OCI-LY7 (cell line): ENCODE measurements at regions of chr3 and their contacts with region 1.

Region 1: DNA sequence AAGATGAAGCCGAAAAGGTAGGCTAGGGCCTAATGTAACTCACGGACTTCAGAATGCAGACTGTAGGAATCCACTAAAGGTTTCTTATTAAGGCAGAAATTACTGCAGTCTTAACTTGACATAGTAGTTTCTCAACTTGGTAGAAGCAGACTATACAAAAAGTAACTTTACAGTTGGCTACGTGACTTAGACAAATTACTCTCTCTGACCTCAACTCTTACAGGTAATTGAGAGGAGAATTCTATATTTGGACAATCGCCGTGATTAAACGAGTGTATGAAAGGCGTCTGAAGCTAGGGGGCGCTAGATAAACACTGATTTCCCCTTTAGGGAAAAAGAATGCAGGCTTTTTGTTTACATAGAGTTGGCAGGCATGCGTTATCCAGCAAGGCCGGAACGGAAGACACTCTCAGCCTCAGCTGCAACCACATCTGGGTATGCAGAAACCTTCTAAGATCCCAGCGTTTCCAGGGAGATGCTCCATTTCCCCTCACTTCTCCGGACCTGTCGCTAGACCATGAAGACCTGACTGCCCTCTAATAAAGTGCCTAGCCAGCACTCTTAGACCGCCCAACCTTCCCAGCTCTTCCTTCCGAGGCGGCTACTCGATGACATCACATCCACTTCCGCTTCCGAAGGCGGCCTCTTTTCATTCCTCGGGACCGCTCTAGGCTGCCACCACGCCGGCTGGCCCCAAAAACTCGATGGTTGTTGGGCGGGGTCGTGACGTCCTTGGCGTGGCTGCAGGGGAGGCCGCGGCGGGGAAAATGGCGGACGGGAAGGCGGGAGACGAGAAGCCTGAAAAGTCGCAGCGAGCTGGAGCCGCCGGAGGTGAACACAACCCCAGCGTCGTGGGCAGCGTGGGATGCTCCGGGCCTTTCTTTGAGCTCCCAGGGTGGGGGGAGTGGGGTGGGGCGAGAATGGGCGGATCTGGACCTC is at the start of gene PCNP:
- DNase-seq: peak; percentile 99
- H3K4me3 ChIP-seq: peak within 1 kb of the TSS; percentile 92
- H3K27ac ChIP-seq: peak within 1 kb of the TSS; percentile 76
- H3K4me1 ChIP-seq: peaks cover 36% of the 10 kb centered on the region
- CTCF ChIP-seq: peak; percentile 96
- total RNA-seq, gene PCNP: 49.2 and 63.3 TPM in 2 replicates

Region 2: DNA sequence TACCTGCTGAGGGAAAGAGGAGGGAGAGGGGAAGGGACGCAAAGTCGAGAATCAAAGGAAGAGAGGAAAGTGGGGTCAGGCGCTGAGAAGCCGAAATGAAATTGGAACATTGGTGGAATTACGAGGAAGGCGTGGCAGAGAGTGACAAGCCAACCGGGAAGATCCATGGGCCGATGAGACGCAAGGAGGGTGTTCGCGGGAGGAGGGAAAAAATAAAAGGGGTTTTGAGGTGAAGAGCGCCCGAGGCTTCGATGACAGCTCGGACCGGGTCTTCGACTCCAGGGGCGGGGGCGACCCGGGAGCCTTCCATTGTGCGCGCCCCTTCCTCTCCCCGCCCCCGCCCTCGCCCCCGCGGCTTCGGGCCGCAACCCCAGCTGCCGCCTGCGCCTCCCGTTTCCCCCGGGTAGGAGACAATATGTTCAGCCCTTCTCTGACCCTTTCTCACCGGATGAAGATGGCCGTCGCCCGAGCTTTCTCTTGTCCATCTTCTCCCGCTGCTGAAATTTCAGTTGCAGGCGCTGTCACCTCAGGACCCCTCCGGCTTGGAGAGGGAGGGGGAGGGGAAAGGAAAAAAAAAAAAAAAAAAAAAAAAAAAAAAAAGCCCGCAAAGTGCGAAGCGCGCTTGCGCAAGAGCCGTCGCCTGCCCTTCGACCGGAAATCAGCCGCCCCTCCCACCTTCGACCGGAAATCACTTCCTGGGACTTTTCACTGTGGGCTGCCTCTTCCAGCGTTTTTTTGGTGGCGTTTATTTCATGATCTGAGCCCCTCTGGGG is 60.9 kb before region 1 on chr3 and contains the start of gene SENP7:
- CTCF ChIA-PET with region 1: no interaction called
- POLR2A ChIA-PET with region 1: interaction called, 11 read pairs
- intact Hi-C with region 1: no loop called
- DNase-seq: peak; percentile 86
- H3K4me3 ChIP-seq: peak within 1 kb of the TSS; percentile 85
- H3K27ac ChIP-seq: peak within 1 kb of the TSS; percentile 64
- H3K4me1 ChIP-seq: peaks cover 13% of the 10 kb centered on the region
- CTCF ChIP-seq: no peak
- total RNA-seq, gene SENP7: 13.6 and 17.7 TPM in 2 replicates

Region 3: DNA sequence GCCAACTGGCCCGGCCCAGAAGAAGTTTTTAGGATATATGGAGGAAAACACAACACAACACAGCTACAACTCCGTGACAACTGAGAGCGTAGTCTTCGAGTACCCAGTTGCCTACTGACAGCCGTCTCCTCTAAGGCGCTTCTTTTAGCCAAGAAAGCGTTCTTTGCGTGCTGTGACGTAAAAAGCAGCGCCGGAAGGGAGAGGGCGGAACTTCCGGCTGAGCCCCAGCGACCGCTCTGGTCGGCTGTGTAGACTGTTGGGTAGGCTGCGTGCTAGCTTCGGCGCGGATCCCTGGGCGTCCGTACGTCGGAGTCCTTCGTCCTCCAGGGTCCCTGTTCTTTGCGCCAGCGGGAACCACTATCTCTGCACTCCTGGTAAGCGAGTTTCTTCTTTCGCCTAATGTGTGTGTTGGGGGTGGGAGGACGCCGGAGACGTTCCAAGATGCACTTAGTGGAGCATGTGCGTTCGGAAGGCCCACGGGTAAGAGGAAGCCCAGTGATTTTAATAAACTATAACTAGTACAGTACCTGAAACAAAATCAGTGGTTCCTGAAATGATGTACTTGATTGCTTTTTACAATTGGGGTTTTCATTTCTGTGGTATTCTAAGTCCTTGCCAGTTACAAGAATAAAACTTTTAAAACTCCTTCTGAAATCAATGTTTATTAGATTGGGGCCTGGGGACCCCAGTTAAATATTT is 11.9 kb before region 1 on chr3 and contains the start of gene TRMT10C:
- CTCF ChIA-PET with region 1: no interaction called
- POLR2A ChIA-PET with region 1: interaction called, 26 read pairs
- intact Hi-C with region 1: loop called (anchors 1 kb)
- DNase-seq: peak; percentile 95
- H3K4me3 ChIP-seq: peak within 1 kb of the TSS; percentile 97
- H3K27ac ChIP-seq: peak within 1 kb of the TSS; percentile 56
- H3K4me1 ChIP-seq: peaks cover 24% of the 10 kb centered on the region
- CTCF ChIP-seq: no peak
- total RNA-seq, gene TRMT10C: 23.6 and 26.5 TPM in 2 replicates

Region 4: DNA sequence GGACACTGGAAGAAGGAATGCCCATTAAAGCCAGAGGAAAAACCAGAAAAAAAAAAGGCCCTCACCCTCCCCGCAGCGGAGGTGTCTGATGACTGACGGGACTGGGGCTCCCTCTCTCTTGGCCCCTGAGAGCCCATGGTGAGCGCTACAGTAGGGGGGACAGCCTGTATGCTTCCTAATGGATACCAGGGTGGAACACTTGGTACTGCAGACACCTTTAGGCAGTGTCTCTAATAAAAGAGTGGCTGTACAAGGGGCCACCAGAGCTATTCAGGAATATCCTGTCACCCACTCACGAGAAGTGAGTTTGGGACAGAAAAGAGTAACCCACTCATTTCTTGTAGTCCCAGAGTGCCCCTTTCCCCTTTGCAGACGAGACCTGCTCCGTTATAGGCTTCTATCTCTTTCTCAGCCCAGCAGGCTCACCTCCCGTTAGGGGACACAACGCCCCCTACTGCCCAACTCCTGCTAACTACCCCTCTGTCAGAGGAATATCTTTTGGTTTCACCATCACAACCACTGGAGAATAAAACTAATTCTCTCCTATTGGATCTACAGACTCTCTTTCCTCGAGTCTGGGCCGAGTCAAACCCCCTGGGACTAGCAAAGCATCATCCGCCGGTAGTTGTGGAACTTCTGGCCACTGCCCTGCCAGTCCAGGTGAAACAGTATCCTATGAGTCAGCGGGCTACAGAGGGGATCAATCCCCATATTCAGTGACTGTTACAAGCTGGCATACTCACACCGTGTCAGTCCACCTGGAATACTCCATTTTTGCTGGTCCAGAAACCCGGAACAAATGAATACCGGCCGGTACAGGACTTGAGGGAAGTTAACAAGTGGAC is 62.5 kb after region 1 on chr3:
- CTCF ChIA-PET with region 1: no interaction called
- POLR2A ChIA-PET with region 1: interaction called, 4 read pairs
- intact Hi-C with region 1: loop called (anchors 1 kb)
- DNase-seq: peak; percentile 73
- H3K4me3 ChIP-seq: no peak overlapping the region
- H3K27ac ChIP-seq: no peak overlapping the region
- H3K4me1 ChIP-seq: no peaks in the 10 kb centered on the region
- CTCF ChIP-seq: peak; percentile 90